Thyroid gland (tissue), 4 donors: ENCODE measurements at regions of chr9 and their contacts with region 1.

Region 1: GRCh38 chr9:92133949-92134604 is 18.9 kb upstream of the SPTLC1 start:
- DNase-seq: peak; percentile 76 to 80
- H3K4me3 ChIP-seq: no peak overlapping the region
- H3K27ac ChIP-seq: no peak overlapping the region
- H3K4me1 ChIP-seq: peaks cover 0 to 8% of the 10 kb centered on the region in 2 donors
- H3K27me3 ChIP-seq: no peaks in the 10 kb centered on the region
- CTCF ChIP-seq: peak; percentile 54 to 98 (median 76)
- POLR2A ChIP-seq: no peak

Region 2: GRCh38 chr9:91197232-91198181 is 936.6 kb before region 1 on chr9:
- intact Hi-C with region 1: no loop called
- DNase-seq: peak; percentile 23 to 30
- H3K4me3 ChIP-seq: no peak overlapping the region
- H3K27ac ChIP-seq: no peak overlapping the region
- H3K4me1 ChIP-seq: peaks cover 17 to 39% of the 10 kb centered on the region in 2 donors
- H3K27me3 ChIP-seq: no peaks in the 10 kb centered on the region
- CTCF ChIP-seq: no peak
- POLR2A ChIP-seq: no peak

Region 3: GRCh38 chr9:91758491-91758981 is 375.5 kb before region 1 on chr9:
- intact Hi-C with region 1: no loop called
- DNase-seq: peak; percentile 39 to 47
- H3K4me3 ChIP-seq: no peak overlapping the region
- H3K27ac ChIP-seq: no peak overlapping the region
- H3K4me1 ChIP-seq: no peaks in the 10 kb centered on the region
- H3K27me3 ChIP-seq: no peaks in the 10 kb centered on the region
- CTCF ChIP-seq: peak in 4 of 6 experiments; percentile 40 to 52 (median 49)
- POLR2A ChIP-seq: no peak

Region 4: DNA sequence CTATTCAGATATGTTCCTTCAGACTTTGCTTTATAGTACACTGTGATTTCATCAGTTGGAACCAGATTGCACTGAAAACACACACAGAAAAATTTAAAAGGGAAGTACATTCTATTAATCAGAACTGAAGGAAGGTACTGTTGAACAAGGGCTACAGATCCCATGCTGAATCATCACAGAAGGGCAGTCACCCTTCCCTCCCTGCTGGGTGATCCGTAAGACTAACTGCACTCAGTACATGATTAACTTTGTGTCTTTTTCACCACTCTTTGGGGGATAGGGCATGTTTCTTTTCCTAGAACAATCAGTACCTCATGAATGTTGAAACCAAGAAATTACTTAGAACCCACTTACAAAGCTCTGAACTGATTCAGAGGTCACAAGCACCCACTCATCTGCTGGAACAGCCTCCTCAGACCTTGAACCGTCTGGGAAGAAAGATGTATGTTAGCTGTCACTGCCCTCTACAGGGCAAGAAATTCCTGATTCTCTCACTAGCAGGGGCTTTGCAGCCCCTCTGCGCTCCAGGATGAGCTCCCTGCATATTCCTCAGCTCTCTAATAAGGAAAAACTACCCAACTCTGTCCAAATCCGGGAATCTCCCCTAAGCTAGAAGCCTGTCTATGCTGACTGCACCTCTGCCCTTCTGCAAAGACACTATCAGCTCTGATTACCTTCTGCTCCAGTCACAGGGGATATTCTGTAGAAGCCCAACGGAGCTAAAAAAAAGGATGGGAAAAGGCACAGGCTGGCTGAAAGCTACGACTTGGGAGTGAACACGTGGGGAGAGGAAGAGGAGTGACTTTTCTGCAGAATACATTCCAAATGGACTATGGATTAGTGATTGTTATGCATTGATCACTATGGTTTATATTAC is 108.4 kb after region 1 on chr9:
- intact Hi-C with region 1: loop called (anchors 10 kb)
- DNase-seq: peak; percentile 27 to 29
- H3K4me3 ChIP-seq: no peak overlapping the region
- H3K27ac ChIP-seq: no peak overlapping the region
- H3K4me1 ChIP-seq: no peaks in the 10 kb centered on the region
- H3K27me3 ChIP-seq: no peaks in the 10 kb centered on the region
- CTCF ChIP-seq: peak in 4 of 6 experiments; percentile 10 to 39 (median 29)
- POLR2A ChIP-seq: no peak

Region 5: DNA sequence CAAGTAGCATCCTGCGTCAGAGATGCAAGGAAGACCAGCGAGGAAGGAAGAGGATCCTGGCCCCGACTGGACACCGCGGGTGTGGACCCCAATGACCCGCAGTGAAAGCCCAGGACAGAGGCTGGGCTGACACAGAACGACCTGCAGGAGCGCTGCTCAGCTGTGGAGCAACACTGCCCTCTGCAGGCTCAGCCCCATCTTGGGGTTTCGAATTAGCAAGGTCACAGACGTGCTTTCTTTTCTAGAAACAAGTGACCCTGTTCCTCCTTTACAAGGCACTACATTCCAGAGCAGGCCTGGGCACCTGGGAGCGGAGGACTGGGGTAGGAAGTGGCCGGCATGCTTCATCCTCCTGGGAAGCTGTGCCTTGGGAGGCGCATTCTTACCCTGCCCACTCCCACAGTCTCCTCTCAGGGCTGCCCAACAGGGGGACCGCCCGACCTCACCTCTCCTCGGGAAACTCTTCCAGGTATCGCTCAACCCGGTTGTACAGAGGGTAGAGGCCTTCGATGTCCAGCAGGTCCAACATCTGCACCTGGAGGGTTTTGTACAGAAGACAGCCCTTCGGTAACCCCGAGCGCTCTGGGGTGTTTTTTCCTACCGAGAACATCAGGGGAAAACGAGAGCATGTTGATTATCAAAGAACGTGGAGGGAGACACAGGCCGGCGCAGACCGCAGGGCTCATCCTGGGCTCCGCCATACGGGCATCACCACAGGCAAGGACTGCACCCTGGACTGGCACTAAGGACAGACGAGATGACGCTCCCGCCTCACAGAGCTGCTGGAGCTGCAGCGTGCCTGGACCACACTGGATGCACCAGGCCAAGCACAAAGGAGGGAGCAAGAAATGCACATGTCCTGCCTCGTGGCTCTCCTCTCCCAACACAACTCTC is 500.9 kb after region 1 on chr9:
- intact Hi-C with region 1: loop called (anchors 10 kb)
- DNase-seq: peak; percentile 53 to 66
- H3K4me3 ChIP-seq: no peak overlapping the region
- H3K27ac ChIP-seq: no peak overlapping the region
- H3K4me1 ChIP-seq: no peaks in the 10 kb centered on the region
- H3K27me3 ChIP-seq: no peaks in the 10 kb centered on the region
- CTCF ChIP-seq: peak; percentile 53 to 87 (median 75)
- POLR2A ChIP-seq: no peak